Activated naive CD4-positive, alpha-beta T cell treated with anti-CD3 and anti-CD28 coated beads for 36 hours (primary cell): ENCODE measurements at regions of chr11 and their contacts with region 1.

Region 1: DNA sequence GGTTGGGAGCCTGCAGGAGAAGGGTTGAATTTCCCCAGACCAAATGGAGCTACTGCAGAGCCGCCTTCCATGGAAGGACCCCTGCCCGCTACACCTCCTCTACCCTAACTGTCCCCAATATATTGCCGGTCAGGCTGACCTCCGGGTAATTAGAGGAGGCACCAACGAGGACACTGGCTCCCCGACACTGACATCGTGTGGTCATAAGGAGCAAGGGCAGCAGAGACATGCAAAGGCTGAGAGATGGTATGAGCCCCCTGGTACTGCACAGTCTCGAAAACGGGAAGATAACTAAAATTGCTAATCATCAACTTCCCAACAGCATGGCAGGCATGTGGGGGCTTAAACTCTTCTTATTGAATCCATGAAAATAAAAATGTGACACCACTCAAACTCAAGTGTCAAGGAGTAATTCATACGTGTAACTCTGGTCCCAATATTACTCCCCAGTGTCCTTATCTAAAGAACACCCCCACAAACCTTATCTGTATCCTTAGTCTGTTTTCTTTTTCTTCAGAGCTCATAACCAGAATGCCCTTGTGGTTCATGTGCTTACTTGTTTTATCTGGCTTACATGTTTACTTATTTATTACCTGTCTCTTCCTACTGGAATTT is 4.4 kb downstream of the CAVIN3 start:
- DNase-seq: peak; percentile 46
- H3K4me3 Mint-ChIP-seq: no peak overlapping the region
- H3K27ac Mint-ChIP-seq: no peak overlapping the region
- H3K4me1 Mint-ChIP-seq: peaks cover 9% of the 10 kb centered on the region
- H3K27me3 Mint-ChIP-seq: peaks cover 44% of the 10 kb centered on the region

Region 2: DNA sequence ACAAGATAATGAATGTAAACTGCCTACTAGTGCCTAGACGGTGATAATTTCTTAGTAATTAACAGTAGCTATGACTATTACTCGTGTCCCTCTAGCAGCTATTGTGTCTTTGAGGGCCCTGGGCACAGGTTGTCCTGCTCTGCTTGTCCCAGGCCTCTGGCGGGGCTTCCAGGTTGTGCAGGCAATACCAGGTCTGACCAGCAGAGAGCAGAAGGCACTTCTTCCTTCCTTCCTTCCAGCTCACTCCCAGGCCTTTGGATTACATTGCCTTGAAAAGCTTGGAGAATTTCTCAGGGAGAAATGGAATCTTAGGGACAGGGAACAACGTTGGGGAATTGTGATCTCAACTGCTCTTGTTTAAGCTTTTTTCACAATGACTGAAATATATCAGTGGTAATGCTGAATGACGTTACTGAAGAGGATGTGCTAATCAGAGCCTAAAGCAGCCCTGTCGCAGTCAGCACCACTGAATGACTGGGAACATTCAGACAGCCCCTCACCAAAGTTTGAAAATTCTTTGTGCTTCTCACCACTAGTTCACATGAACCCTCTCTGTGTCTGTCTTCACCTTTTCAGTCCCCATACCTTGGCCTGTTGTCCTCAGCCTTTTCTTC is 64.7 kb before region 1 on chr11:
- CTCF ChIA-PET with region 1: interaction called, 67 read pairs
- intact Hi-C with region 1: loop called (anchors 1 kb)
- DNase-seq: peak; percentile 73
- H3K4me3 Mint-ChIP-seq: no peak overlapping the region
- H3K27ac Mint-ChIP-seq: no peak overlapping the region
- H3K4me1 Mint-ChIP-seq: no peaks in the 10 kb centered on the region
- H3K27me3 Mint-ChIP-seq: no peaks in the 10 kb centered on the region

Region 3: DNA sequence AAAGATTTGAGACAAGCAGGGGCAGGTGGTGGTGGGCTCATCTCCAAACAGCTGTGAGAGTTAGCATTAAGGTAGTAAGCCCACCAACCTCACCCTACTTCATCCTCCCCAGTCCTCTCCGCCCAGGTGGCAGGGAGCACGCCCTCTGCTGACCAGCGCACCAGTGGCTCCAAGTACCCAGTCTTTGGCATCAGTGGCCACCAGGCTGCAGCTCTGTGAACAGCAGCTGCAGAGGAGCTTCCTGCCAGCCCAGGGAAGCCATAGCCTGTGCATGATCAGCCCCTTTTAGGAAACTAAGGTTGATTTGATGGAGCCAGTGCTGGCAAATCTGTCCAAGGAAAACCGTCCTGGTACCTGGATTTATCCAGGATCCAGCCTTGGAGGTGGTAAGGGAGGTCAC is 17.3 kb before region 1 on chr11:
- CTCF ChIA-PET with region 1: interaction called, 11 read pairs
- intact Hi-C with region 1: loop called (anchors 2 kb)
- DNase-seq: peak; percentile 43
- H3K4me3 Mint-ChIP-seq: no peak overlapping the region
- H3K27ac Mint-ChIP-seq: no peak overlapping the region
- H3K4me1 Mint-ChIP-seq: no peaks in the 10 kb centered on the region
- H3K27me3 Mint-ChIP-seq: peaks cover 4% of the 10 kb centered on the region

Region 4: GRCh38 chr11:6353367-6353987 is 37.6 kb after region 1 on chr11:
- CTCF ChIA-PET with region 1: interaction called, 51 read pairs
- intact Hi-C with region 1: loop called (anchors 1 kb)
- DNase-seq: peak; percentile 67
- H3K4me3 Mint-ChIP-seq: no peak overlapping the region
- H3K27ac Mint-ChIP-seq: no peak overlapping the region
- H3K4me1 Mint-ChIP-seq: peaks cover 9% of the 10 kb centered on the region
- H3K27me3 Mint-ChIP-seq: no peaks in the 10 kb centered on the region

Region 5: DNA sequence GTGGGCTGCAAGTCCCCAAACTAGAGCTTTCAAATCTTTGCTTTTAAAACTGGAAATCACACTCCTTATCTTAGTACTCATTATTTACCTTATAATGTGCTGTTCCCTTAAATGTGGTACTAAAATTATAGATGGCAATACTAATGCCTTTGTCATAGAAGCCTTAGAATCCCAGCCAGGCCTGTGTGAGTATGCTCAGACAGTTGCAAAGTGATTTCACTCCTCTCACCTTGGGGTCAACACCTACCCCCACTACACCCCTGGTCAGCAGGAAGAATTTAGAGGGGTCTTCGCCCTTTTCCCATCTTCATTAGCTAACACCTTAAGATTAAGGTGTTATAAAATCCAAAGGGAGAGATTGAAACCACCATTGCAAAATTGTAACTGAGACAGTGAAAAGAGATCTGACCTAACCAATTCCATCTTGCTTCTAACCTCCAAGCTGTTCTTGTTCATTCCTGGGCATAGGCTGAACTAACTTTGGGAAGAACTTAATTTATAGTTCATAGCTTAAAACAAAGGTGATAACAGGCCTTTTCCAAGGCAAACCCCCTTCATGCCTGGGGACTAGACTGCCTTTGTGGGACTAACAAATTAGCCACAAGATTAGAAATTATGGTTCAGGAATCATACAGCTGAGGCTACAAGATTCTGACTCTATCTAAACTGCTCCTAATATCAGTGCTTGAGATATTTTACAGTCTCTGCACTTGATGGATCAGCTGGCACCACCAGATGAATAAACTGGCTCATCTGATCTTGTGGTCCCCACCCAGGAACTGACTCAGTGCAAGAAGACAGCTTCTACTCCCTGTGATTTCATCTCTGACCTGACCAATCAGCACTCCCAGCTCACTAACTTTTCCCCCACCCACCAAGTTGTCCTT is 377.7 kb after region 1 on chr11:
- CTCF ChIA-PET with region 1: no interaction called
- intact Hi-C with region 1: loop called (anchors 5 kb)
- DNase-seq: peak; percentile 84
- H3K4me3 Mint-ChIP-seq: no peak overlapping the region
- H3K27ac Mint-ChIP-seq: peak overlapping the region; percentile 37
- H3K4me1 Mint-ChIP-seq: peaks cover 38% of the 10 kb centered on the region
- H3K27me3 Mint-ChIP-seq: no peaks in the 10 kb centered on the region